ENCODE measurements at regions of chr12 and their contacts with region 1.

Region 1: GRCh38 chr12:51270067-51270970 is at the start of gene SMAGP:
- DNase-seq: peak; percentile 81
- H3K4me3 ChIP-seq: peak within 1 kb of the TSS; percentile 60 to 86
- H3K27ac ChIP-seq: peak within 1 kb of the TSS in 1 of 2 experiments; percentile 93; a peak in 2 of 4 replicates
- H3K4me1 ChIP-seq: peaks cover 0 to 2% of the 10 kb centered on the region in 2 experiments; a peak in 1 of 4 replicates
- H3K27me3 ChIP-seq: no peaks in the 10 kb centered on the region
- CTCF ChIP-seq: no peak
- EP300 ChIP-seq: 0 out of 4 replicates have a peak, but pooled peaks of 1 of the 2 experiments have one; percentile 5
- RAD21 ChIP-seq: no peak
- polyA plus RNA-seq, gene SMAGP: 22.6 and 26.3 TPM in 2 replicates

Region 2: GRCh38 chr12:51281202-51281924 is 11.0 kb after region 1 on chr12:
- CTCF ChIA-PET with region 1: interaction called, 10 read pairs
- POLR2A ChIA-PET with region 1: no interaction called
- DNase-seq: no peak
- H3K4me3 ChIP-seq: no peak overlapping the region
- H3K27ac ChIP-seq: peak overlapping the region in 1 of 2 experiments; percentile 49; a peak in 1 of 4 replicates
- H3K4me1 ChIP-seq: no peaks in the 10 kb centered on the region
- H3K27me3 ChIP-seq: no peaks in the 10 kb centered on the region
- CTCF ChIP-seq: no peak
- EP300 ChIP-seq: no peak
- RAD21 ChIP-seq: no peak

Region 3: DNA sequence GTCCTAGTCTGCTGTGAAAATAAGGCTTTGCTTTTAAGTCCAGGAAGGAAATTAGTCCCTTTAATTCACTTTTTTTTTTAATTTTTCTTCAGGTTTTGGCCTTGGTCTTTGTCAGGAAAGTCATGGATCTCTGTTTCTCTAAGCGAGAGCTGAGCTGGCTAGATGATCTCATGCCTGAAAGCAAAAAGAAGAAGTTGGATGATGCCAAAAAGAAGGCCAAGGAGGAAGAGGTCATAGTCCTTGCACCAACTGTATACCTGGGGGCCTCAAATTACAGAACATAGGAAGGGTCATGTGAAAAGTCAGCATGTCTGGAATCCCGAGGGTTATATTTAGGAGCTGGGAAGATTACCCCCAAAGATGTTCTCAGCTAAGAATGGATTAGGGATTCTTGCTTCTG is 226.6 kb after region 1 on chr12:
- CTCF ChIA-PET with region 1: no interaction called
- POLR2A ChIA-PET with region 1: no interaction called
- DNase-seq: no peak
- H3K4me3 ChIP-seq: no peak overlapping the region
- H3K27ac ChIP-seq: no peak overlapping the region
- H3K4me1 ChIP-seq: peaks cover 0 to 17% of the 10 kb centered on the region in 2 experiments; a peak in 2 of 4 replicates
- H3K27me3 ChIP-seq: no peaks in the 10 kb centered on the region
- CTCF ChIP-seq: no peak
- EP300 ChIP-seq: no peak
- RAD21 ChIP-seq: no peak

Measured in SK-N-SH (cell line).